MCF 10A (cell line): ENCODE measurements at regions of chr6 and their contacts with region 1.

Region 1: DNA sequence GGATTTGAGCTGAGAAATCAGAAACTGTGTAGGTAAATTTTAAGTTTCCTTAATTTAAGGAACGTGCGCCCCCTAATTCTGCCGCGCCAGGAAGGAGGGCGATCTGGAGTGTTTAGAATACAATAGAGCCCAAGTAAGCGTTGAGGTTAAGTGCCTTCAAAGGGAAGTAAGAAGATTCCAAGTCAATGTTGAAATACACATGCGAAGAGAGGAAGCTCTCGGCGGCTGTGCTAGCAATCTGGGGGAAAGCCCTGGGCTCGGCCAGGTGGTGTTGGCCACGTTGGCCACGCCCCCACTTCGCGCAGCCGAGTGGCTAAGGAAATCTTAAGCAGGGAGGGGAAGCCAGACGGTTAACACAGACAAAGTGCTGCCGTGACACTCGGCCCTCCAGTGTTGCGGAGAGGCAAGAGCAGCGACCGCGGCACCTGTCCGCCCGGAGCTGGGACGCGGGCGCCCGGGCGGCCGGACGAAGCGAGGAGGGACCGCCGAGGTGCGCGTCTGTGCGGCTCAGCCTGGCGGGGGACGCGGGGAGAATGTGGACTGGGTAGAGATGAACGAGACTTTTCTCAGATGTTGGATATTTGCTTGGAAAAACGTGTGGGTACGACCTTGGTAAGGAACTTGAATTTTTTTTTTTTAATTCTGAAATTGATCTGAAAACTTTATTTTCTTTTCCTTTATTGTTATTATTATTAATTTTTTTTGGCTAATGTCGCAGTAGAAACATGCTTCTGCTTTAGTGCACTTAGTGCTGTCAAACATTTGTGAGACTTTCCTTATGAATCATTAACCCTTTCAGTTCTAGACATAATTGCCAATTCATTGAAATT is at the start of gene PRDM1:
- DNase-seq: peak; percentile 93
- H3K4me3 Mint-ChIP-seq: peak within 1 kb of the TSS; percentile 97
- H3K27ac Mint-ChIP-seq: peak within 1 kb of the TSS; percentile 89
- H3K4me1 Mint-ChIP-seq: peaks cover 58% of the 10 kb centered on the region
- H3K27me3 Mint-ChIP-seq: no peaks in the 10 kb centered on the region
- CTCF ChIP-seq: no peak
- total RNA-seq, gene PRDM1: 12.6 and 13.1 TPM in 2 replicates

Region 2: DNA sequence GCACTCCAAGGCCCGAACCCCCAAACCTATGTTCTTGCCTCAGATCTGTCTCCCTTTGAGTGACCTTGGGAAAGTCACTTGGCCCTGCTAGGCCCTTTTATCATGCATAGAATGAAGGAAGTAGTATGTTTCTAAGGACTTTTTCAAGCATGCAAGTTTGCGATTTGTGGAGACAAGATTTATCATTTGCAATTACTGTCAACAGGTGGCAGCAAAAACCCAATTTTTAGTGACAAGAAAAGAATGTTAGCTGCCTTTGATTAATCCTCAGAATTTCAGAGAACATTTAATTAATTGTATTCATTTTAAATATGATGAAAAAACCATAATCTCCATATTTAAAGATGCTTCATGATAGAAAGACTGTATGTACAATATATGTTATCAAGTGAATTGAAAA is 655.0 kb before region 1 on chr6:
- CTCF ChIA-PET with region 1: interaction called, 12 read pairs
- POLR2A ChIA-PET with region 1: interaction called, 10 read pairs
- intact Hi-C with region 1: loop called (anchors 1 kb)
- DNase-seq: peak; percentile 70
- H3K4me3 Mint-ChIP-seq: no peak overlapping the region
- H3K27ac Mint-ChIP-seq: no peak overlapping the region
- H3K4me1 Mint-ChIP-seq: peaks cover 26% of the 10 kb centered on the region
- H3K27me3 Mint-ChIP-seq: no peaks in the 10 kb centered on the region
- CTCF ChIP-seq: peak; percentile 57

Region 3: GRCh38 chr6:105733565-105734162 is 352.5 kb before region 1 on chr6:
- CTCF ChIA-PET with region 1: interaction called, 6 read pairs
- POLR2A ChIA-PET with region 1: interaction called, 5 read pairs
- intact Hi-C with region 1: loop called (anchors 1 kb)
- DNase-seq: peak; percentile 51
- H3K4me3 Mint-ChIP-seq: no peak overlapping the region
- H3K27ac Mint-ChIP-seq: no peak overlapping the region
- H3K4me1 Mint-ChIP-seq: peaks cover 8% of the 10 kb centered on the region
- H3K27me3 Mint-ChIP-seq: no peaks in the 10 kb centered on the region
- CTCF ChIP-seq: peak; percentile 35

Region 4: DNA sequence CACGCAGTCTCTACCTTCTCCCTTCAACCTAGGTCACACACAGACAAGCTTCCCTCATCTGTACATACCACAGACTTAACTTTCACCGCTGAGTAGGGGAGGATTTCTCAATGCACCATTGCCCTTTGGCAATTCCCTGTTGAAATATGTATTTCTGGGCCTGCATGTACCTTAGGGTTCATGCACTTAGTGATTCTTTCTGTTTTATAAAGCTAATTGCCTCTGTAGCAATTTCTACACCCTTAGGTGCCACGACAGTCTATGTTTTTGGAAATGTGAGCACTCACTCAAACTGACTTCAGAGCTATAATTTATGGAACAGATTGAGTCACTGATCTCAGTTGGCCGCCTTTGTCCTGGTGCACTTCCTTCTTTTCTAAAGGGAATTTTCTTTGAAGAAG is 253.8 kb before region 1 on chr6:
- CTCF ChIA-PET with region 1: interaction called, 3 read pairs
- POLR2A ChIA-PET with region 1: interaction called, 11 read pairs
- intact Hi-C with region 1: no loop called
- DNase-seq: peak; percentile 82
- H3K4me3 Mint-ChIP-seq: no peak overlapping the region
- H3K27ac Mint-ChIP-seq: peak overlapping the region; percentile 81
- H3K4me1 Mint-ChIP-seq: peaks cover 19% of the 10 kb centered on the region
- H3K27me3 Mint-ChIP-seq: no peaks in the 10 kb centered on the region
- CTCF ChIP-seq: no peak

Region 5: DNA sequence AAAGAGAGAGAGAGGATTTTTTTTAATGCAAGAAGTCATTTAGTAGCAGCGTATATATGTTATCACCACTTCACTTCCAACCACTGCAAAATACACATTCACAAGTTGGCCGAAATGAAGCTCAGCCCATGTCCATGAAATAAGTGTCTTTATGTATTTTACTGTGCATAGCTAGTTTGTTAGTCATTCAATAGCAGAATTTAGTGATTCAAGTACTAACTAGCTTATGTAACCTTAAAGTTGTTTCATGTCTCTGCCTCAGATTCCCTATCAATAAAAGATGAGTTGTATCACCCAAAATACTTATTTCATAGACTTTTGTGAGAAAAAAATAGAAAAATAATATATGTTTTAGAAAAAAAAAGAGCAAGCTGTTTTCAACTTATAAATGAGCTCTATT is 153.8 kb before region 1 on chr6:
- CTCF ChIA-PET with region 1: no interaction called
- POLR2A ChIA-PET with region 1: no interaction called
- intact Hi-C with region 1: no loop called
- DNase-seq: no peak
- H3K4me3 Mint-ChIP-seq: no peak overlapping the region
- H3K27ac Mint-ChIP-seq: no peak overlapping the region
- H3K4me1 Mint-ChIP-seq: no peaks in the 10 kb centered on the region
- H3K27me3 Mint-ChIP-seq: no peaks in the 10 kb centered on the region
- CTCF ChIP-seq: no peak

Region 6: GRCh38 chr6:106097411-106098231 is 11.4 kb after region 1 on chr6:
- CTCF ChIA-PET with region 1: interaction called, 7 read pairs
- POLR2A ChIA-PET with region 1: interaction called, 44 read pairs
- intact Hi-C with region 1: no loop called
- DNase-seq: peak; percentile 28
- H3K4me3 Mint-ChIP-seq: peak overlapping the region; percentile 73
- H3K27ac Mint-ChIP-seq: peak overlapping the region; percentile 85
- H3K4me1 Mint-ChIP-seq: peaks cover 25% of the 10 kb centered on the region
- H3K27me3 Mint-ChIP-seq: no peaks in the 10 kb centered on the region
- CTCF ChIP-seq: no peak

Region 7: DNA sequence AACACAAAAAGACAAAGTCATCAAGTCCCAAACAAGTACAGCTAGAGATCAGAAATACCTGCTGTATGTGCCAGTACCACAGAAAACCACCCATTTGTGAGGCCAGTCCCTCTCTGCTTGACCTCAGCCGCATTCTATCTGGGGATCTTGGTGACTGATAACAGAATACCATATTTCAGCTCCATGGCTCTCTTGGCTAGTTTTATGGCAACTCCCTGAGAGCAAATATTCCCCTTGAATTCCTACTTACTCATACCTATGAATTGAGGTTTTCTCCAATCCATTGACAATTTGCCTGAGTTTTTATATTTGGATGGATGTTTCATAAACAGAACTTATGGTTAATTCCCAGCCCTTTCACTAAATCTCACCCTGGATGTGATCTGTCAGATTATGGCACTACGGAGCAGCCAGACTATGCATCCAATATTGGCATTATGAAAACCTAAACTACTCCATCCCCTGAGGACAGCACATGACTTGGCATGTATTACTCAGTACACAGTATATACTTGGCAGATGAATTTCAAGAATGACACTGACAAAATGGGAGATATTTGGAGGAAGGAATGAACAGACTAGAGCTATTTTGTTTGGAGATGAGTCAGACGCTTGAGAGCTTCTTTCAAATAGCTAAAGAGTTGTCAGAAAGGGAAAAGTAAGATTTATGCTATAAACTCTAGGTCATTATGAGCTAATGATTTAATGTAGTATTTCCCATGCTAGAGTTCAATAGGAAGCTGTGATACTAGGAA is 95.6 kb after region 1 on chr6:
- CTCF ChIA-PET with region 1: no interaction called
- POLR2A ChIA-PET with region 1: no interaction called
- intact Hi-C with region 1: no loop called
- DNase-seq: peak; percentile 57
- H3K4me3 Mint-ChIP-seq: no peak overlapping the region
- H3K27ac Mint-ChIP-seq: peak overlapping the region; percentile 66
- H3K4me1 Mint-ChIP-seq: peaks cover 16% of the 10 kb centered on the region
- H3K27me3 Mint-ChIP-seq: no peaks in the 10 kb centered on the region
- CTCF ChIP-seq: no peak

Region 8: GRCh38 chr6:106300944-106301343 is 214.7 kb after region 1 on chr6:
- CTCF ChIA-PET with region 1: interaction called, 6 read pairs
- POLR2A ChIA-PET with region 1: no interaction called
- intact Hi-C with region 1: loop called (anchors 2 kb)
- DNase-seq: peak; percentile 62
- H3K4me3 Mint-ChIP-seq: no peak overlapping the region
- H3K27ac Mint-ChIP-seq: no peak overlapping the region
- H3K4me1 Mint-ChIP-seq: no peaks in the 10 kb centered on the region
- H3K27me3 Mint-ChIP-seq: no peaks in the 10 kb centered on the region
- CTCF ChIP-seq: peak; percentile 50